ENCODE measurements at regions of chr14 and their contacts with region 1.

Region 1: DNA sequence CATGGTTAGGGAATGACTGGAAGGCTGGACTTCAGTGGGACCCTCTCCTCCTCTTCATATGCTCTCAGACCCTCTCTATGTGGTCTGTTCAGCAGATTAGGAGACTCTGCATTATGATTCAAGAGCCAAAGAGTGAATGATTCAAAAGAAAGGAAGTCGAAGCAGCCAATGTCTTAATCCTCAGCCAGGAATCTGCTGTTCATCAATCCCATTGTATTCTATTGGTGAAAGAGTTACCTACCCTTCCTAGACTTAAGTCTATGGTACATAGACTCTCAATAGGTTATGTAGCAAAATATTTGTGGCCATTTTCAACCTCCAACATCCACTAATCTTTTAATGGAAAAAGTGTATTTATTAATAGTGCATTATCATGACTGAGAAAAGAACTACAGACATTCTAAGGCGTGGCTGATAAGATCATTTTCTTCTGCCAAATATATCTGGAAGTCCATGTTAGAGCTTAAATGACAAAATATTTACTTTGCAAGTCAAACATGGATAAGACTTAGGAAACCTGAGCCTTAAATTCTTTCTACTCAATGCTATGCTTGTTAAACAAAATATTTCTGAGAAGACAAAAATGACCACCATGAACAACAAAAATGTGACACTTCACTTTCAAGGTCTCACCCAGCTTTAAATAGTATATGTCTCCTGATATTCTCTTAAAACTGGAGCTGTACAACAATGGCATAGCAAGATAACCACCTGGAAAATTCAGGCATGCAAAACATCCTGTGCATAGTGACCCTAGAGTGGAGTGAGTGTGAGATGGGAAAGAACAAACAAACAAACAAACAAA is 1100.6 kb downstream of the GALC start:
- DNase-seq: peak; percentile 79
- ATAC-seq: peak; percentile 81
- H3K4me3 ChIP-seq: no peak overlapping the region
- H3K27ac ChIP-seq: peak overlapping the region; percentile 24
- H3K4me1 ChIP-seq: peaks cover 56% of the 10 kb centered on the region
- H3K27me3 ChIP-seq: no peaks in the 10 kb centered on the region
- CTCF ChIP-seq: no peak
- EP300 ChIP-seq: peak in 1 of 2 experiments; percentile 85; a peak in 2 of 4 replicates
- POLR2A ChIP-seq: no peak
- RAD21 ChIP-seq: no peak

Region 2: GRCh38 chr14:86673523-86673969 is 218.8 kb before region 1 on chr14:
- CTCF ChIA-PET with region 1: no interaction called
- POLR2A ChIA-PET with region 1: no interaction called
- in situ Hi-C with region 1: no loop called
- intact Hi-C with region 1: loop called (anchors 10 kb)
- DNase-seq: peak; percentile 75
- ATAC-seq: peak; percentile 99
- H3K4me3 ChIP-seq: peak overlapping the region in 1 of 3 experiments; percentile 12; a peak in 1 of 6 replicates
- H3K27ac ChIP-seq: peak overlapping the region; percentile 39
- H3K4me1 ChIP-seq: peaks cover 24% of the 10 kb centered on the region
- H3K27me3 ChIP-seq: no peaks in the 10 kb centered on the region
- CTCF ChIP-seq: no peak
- EP300 ChIP-seq: no peak
- POLR2A ChIP-seq: no peak
- RAD21 ChIP-seq: no peak

Region 3: GRCh38 chr14:86852530-86852929 is 39.8 kb before region 1 on chr14:
- CTCF ChIA-PET with region 1: no interaction called
- POLR2A ChIA-PET with region 1: no interaction called
- in situ Hi-C with region 1: no loop called
- intact Hi-C with region 1: no loop called
- DNase-seq: no peak
- ATAC-seq: no peak
- H3K4me3 ChIP-seq: no peak overlapping the region
- H3K27ac ChIP-seq: no peak overlapping the region
- H3K4me1 ChIP-seq: no peaks in the 10 kb centered on the region
- H3K27me3 ChIP-seq: no peaks in the 10 kb centered on the region
- CTCF ChIP-seq: no peak
- EP300 ChIP-seq: no peak
- POLR2A ChIP-seq: no peak
- RAD21 ChIP-seq: no peak

Region 4: DNA sequence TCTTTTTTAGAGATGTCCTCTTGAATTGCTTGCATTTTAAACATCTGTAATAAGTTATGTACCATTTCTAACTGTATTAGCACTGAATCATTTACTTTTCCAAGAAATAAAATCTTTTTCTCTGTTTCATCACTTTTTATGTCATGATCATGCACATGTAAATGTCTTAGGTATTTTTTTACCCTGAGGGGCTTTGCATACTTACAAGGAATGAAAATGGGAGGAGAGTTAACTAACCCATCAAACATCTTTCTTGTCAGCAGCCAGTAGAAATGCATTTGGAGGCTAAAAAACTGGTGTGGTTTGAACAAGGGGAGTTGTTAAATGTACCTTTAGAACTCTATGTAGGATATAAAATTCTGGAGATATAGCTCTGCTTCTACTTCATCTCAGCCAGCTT is 20.4 kb after region 1 on chr14:
- CTCF ChIA-PET with region 1: no interaction called
- POLR2A ChIA-PET with region 1: no interaction called
- in situ Hi-C with region 1: no loop called
- intact Hi-C with region 1: no loop called
- DNase-seq: no peak
- ATAC-seq: no peak
- H3K4me3 ChIP-seq: no peak overlapping the region
- H3K27ac ChIP-seq: no peak overlapping the region
- H3K4me1 ChIP-seq: no peaks in the 10 kb centered on the region
- H3K27me3 ChIP-seq: no peaks in the 10 kb centered on the region; a peak in 1 of 5 replicates
- CTCF ChIP-seq: no peak
- EP300 ChIP-seq: no peak
- POLR2A ChIP-seq: no peak
- RAD21 ChIP-seq: no peak

Region 5: GRCh38 chr14:87014854-87015253 is 122.5 kb after region 1 on chr14:
- CTCF ChIA-PET with region 1: no interaction called
- POLR2A ChIA-PET with region 1: no interaction called
- in situ Hi-C with region 1: no loop called
- intact Hi-C with region 1: no loop called
- DNase-seq: no peak
- ATAC-seq: 0 out of 3 replicates have a peak, but pooled peaks have one; percentile 33
- H3K4me3 ChIP-seq: no peak overlapping the region
- H3K27ac ChIP-seq: no peak overlapping the region
- H3K4me1 ChIP-seq: no peaks in the 10 kb centered on the region
- H3K27me3 ChIP-seq: no peaks in the 10 kb centered on the region
- CTCF ChIP-seq: peak; percentile 36; the same call in 1 of the 2 replicates
- EP300 ChIP-seq: no peak
- POLR2A ChIP-seq: no peak
- RAD21 ChIP-seq: no peak